Activated T-helper 1 cell treated with anti-CD3 and anti-CD28 coated beads, Interleukin-12 subunit alpha, Interleukin-12 subunit beta, Interleukin-2, Interleukin-4 antibody, amounts not matched to agents 30 ng/mL and 10 ng/mL and 1 ng/mL, durations not matched to agents 14 hours and 24 hours and 36 hours (primary cell): ENCODE measurements at regions of chr11 and their contacts with region 1.

Region 1: DNA sequence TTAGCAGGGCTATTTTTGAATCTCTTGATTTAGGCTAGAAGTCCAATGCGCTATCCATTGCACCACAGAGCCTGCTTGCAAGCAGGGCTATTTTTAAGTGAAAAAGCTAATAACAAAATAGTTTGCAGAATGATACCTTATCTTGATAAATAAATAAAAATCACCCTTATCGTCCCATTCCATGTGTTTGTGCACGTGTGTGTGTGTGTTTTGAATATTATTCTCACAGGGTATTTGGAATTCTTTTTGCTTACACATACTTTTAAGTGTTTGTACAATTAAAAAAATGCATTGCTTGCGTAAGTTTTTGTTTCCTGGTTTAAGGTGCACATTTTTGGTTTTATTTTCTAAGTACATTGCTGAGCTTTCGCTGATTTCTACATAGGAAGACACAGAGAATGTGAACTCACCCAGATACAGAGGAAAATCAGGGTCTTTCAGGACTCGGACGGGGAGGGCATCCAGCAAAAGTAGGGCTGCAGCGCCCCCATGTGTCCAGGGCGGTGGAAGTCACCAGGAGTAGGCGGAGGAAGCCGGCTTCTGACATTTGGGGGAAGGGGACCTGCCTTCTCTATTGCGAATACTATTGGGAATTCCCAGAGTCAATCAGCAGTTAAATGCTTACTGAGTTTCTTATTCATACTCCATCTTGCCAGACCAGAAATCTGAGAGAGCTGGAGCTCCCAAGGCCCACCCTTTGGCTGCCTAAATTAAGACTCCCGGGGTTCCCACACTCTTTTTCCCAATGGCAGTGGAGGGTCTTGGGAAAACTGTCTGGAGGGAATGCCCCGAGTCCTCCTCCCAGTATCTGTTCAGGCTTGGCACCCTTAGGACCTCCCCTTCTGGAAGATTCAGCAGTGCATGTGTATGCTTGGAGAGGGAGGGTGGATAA is 27.2 kb downstream of the SLC1A2 start:
- DNase-seq: peak; percentile 61
- H3K4me3 Mint-ChIP-seq: no peak overlapping the region
- H3K27ac Mint-ChIP-seq: no peak overlapping the region
- H3K4me1 Mint-ChIP-seq: peaks cover 26% of the 10 kb centered on the region
- H3K27me3 Mint-ChIP-seq: peaks cover 14% of the 10 kb centered on the region

Region 2: DNA sequence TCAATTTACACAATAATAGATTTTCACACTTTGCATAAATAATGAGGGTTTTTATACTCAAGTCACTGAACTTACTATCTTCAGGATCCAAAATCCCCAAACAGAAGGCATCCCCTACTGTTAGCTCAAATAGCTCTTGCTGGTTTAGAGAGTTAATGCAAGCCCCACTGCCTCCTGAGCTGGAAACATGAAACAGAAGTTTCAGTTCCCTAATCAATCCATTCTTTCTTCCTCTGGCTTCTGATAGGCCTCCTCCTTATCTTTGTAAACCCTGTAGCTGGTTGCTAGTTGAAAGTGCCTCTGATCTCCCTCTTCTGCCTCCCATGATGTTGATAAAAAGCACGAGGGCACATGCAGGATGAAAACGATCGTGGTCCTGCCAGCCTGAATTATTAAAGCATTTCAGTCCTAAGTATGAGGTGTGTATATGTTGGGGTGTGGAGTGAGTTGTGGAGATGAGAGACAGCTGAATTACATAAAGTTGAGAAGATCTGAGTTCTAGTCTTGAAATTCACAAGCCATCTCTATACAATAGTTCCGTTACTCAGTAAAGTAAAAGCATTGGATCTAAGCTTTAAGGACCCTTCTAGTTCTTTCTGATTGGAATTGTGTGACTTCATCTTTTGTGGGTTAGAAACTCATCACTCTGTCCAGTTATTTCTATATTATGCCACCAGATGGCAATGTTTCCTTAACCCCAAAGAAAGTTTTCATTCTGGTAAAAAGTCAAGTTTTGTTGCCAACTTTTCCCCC is 806.3 kb before region 1 on chr11:
- intact Hi-C with region 1: loop called (anchors 1 kb)
- DNase-seq: no peak
- H3K4me3 Mint-ChIP-seq: no peak overlapping the region
- H3K27ac Mint-ChIP-seq: no peak overlapping the region
- H3K4me1 Mint-ChIP-seq: no peaks in the 10 kb centered on the region
- H3K27me3 Mint-ChIP-seq: peaks cover 21% of the 10 kb centered on the region

Region 3: DNA sequence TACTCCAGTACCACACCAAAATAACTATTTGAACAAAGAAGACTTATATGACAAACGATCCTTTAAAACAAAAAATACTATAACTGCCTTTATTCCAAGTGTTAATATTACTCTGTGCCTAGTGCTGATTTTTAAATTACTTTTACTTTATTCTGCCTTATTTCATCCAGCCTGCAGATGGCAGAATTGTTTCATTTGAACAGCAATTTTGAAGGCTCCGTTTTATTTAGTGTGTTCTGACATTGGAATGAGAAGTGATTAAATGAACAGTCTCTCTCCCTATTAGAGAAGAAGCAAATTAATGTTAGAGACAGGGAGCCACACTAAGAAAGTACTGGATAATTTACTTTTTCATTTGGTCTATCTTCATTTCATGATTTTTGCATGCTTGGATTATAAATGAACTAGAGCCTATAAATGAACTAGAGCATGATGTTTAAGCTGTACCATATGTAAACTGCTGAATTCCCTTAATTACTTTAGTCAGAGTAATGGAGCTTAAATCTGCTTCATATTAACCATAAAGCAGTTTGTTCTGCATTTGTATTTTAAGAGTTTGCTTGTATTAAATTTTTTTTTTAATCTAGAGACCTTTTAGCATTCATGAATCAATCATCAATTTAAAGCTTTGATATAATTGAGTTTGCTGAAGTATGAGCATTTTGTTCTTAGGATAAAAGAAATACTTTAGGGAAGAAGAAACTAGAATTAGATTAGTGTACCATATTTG is 465.9 kb before region 1 on chr11:
- intact Hi-C with region 1: loop called (anchors 1 kb)
- DNase-seq: no peak
- H3K4me3 Mint-ChIP-seq: no peak overlapping the region
- H3K27ac Mint-ChIP-seq: no peak overlapping the region
- H3K4me1 Mint-ChIP-seq: peaks cover 7% of the 10 kb centered on the region
- H3K27me3 Mint-ChIP-seq: no peaks in the 10 kb centered on the region

Region 4: GRCh38 chr11:35082321-35083182 is 309.6 kb before region 1 on chr11:
- intact Hi-C with region 1: loop called (anchors 2 kb)
- DNase-seq: peak; percentile 85
- H3K4me3 Mint-ChIP-seq: peak overlapping the region; percentile 56
- H3K27ac Mint-ChIP-seq: peak overlapping the region; percentile 91
- H3K4me1 Mint-ChIP-seq: peaks cover 82% of the 10 kb centered on the region
- H3K27me3 Mint-ChIP-seq: no peaks in the 10 kb centered on the region

Region 5: GRCh38 chr11:35214792-35215193 is 177.4 kb before region 1 on chr11:
- intact Hi-C with region 1: loop called (anchors 5 kb)
- DNase-seq: no peak
- H3K4me3 Mint-ChIP-seq: no peak overlapping the region
- H3K27ac Mint-ChIP-seq: no peak overlapping the region
- H3K4me1 Mint-ChIP-seq: peaks cover 49% of the 10 kb centered on the region
- H3K27me3 Mint-ChIP-seq: no peaks in the 10 kb centered on the region

Region 6: GRCh38 chr11:35337136-35337918 is 54.8 kb before region 1 on chr11:
- intact Hi-C with region 1: loop called (anchors 1 kb)
- DNase-seq: no peak
- H3K4me3 Mint-ChIP-seq: no peak overlapping the region
- H3K27ac Mint-ChIP-seq: peak overlapping the region; percentile 6
- H3K4me1 Mint-ChIP-seq: peaks cover 40% of the 10 kb centered on the region
- H3K27me3 Mint-ChIP-seq: peaks cover 3% of the 10 kb centered on the region

Region 7: GRCh38 chr11:35373284-35373933 is 18.8 kb before region 1 on chr11:
- intact Hi-C with region 1: no loop called
- DNase-seq: no peak
- H3K4me3 Mint-ChIP-seq: no peak overlapping the region
- H3K27ac Mint-ChIP-seq: no peak overlapping the region
- H3K4me1 Mint-ChIP-seq: no peaks in the 10 kb centered on the region
- H3K27me3 Mint-ChIP-seq: peaks cover 16% of the 10 kb centered on the region

Region 8: DNA sequence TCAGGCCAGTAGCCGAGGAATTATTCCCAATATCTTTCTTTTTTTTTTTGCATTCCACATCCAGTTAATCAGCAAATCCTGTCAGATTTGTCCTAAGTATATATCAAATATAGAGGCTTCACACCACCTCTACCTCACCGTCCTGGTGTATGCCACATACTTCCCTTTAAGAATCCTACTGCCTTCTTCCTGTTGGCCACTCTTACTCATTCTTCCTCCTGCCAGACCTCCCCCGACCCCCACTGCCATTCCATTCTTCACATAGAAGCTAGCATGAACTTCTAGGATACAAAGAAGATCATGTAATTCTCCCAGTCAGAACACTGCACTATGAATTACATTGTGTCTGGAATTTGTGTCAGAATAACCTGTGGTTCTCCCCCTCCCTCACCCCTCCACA is 359.9 kb after region 1 on chr11:
- intact Hi-C with region 1: no loop called
- DNase-seq: no peak
- H3K4me3 Mint-ChIP-seq: no peak overlapping the region
- H3K27ac Mint-ChIP-seq: no peak overlapping the region
- H3K4me1 Mint-ChIP-seq: no peaks in the 10 kb centered on the region
- H3K27me3 Mint-ChIP-seq: no peaks in the 10 kb centered on the region